ENCODE measurements at regions of chr4 and their contacts with region 1.

Region 1: DNA sequence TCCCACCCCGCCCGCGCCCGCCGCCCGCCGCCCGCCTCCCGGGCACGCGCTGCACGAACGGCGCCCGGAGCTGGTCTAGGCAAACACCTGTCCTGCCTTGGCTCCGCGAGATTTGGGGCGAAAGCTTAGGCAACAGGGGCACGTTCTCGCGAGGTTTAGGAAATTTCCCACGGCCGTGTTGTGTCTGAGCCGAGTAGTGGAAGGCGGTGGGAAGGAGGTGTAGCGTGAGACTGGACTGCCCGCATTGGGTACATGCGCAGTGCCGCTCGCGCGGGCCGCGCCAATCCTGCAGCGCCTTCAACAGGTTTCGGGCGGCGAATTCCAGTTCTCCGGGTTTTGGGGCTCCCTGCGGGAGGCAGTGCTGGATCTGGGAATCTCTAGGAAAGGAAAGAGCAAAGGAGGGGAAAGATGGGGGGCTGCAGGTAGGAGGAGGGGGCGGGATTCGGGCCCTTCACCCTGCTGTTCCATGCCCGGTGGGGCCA is 1.3 kb upstream of the RBPJ start:
- DNase-seq: peak; percentile 99
- H3K4me3 Mint-ChIP-seq: peak overlapping the region; percentile 97
- H3K27ac Mint-ChIP-seq: peak overlapping the region; percentile 99
- H3K4me1 Mint-ChIP-seq: peaks cover 26% of the 10 kb centered on the region
- H3K27me3 Mint-ChIP-seq: no peaks in the 10 kb centered on the region

Region 2: DNA sequence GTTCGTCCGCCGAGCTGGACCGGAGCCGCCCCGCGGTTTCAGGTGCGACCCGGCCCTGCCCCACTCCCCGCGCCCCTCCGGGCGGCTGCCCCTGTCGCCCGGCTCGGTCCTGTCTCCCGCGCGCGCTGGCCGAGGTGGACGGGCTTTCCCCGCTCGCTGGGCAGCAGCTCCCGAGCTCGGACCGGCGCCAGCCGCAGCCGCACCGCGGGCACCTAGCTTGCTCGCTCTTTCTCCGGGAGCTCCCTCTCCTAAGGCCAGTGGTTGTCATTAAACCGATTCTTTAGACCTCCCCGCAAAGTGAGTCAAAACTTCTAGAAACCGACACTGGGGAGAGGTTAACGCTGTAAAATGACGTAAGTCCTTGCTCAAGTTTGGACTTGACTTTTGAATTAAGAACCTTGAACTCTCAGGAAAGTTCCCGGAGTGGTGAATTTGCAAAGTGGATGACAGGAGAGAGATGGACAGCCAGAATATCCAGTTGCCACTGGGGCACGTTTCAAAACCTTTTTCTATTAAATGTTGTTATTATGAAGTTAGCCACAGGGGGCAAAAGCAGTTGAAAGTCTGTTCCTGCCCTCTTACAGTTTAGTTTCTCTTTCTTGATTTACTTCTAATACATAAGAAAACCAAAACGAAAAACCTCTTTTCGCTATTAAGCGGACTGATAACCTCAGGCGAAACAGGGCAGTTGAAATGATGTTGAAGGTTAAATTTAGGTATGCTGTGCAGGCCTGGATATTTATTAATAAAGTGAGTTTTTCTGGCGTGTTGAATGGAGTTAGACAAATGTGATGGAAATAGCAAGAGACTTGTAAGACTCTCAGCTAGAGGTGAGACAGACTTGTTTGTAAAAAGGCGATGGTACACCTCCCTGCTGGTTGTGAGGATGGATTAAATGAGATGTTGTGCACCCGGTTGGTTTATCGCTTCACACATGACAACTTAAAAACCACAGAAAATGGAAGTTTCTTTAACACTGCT is 1084.8 kb before region 1 on chr4:
- CTCF ChIA-PET with region 1: no interaction called
- intact Hi-C with region 1: loop called (anchors 10 kb)
- DNase-seq: peak; percentile 63
- H3K4me3 Mint-ChIP-seq: peak overlapping the region; percentile 92
- H3K27ac Mint-ChIP-seq: peak overlapping the region; percentile 91
- H3K4me1 Mint-ChIP-seq: peaks cover 40% of the 10 kb centered on the region
- H3K27me3 Mint-ChIP-seq: no peaks in the 10 kb centered on the region

Region 3: DNA sequence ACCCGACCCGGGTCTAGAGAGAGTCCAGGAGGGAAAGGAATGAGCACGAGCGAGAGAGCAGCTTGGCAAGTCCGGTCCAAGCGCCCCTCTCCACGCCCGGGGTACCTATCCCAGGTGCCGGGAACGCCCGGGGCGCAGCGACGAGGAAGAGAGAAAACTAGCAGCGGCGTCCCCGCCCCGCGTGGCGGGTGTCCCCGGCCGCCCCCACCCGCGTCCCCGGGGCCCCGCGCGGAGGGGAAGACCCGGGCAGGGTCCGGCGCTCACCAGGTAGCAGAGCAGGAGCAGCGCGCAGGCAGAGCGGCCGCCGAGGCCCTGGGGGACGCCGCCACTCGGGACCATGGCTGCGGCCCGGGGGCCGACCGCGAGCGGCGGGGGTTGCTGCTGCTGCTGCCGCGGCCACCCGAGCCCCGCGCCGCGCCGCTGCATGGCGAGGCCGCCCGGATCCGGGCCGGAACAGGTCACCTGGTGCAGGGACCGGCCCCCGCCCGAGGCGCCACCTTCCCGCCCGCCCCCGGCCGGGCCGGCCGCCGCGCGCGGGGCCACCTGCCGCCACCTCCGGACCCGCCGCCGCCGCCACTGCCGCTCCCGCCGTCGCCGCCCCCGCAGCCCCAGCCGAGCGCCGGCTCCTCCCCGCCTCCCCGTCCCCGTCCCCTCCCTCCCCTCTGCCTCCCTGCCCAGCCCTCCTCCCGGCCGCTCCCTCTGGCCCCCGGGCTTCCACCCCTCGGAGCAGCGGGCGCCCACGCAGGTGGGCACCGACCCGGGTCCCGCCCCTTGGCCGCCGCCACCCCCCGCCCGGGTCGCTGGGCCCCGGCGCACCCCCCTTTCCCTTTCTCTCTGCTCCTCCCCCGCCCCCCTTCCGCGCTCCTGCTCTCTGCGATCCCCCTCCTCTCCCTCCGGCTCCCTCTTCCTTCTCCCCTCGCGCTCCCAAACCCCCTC is 456.8 kb before region 1 on chr4 and contains the start of gene SEL1L3:
- CTCF ChIA-PET with region 1: no interaction called
- intact Hi-C with region 1: loop called (anchors 2 kb)
- DNase-seq: peak; percentile 53
- H3K4me3 Mint-ChIP-seq: peak within 1 kb of the TSS; percentile 93
- H3K27ac Mint-ChIP-seq: peak within 1 kb of the TSS; percentile 92
- H3K4me1 Mint-ChIP-seq: peaks cover 33% of the 10 kb centered on the region
- H3K27me3 Mint-ChIP-seq: no peaks in the 10 kb centered on the region
- total RNA-seq, gene SEL1L3: 32.3 to 38.2 TPM

Region 4: GRCh38 chr4:26061248-26061986 is 258.1 kb before region 1 on chr4:
- CTCF ChIA-PET with region 1: interaction called, 3 read pairs
- intact Hi-C with region 1: loop called (anchors 1 kb)
- DNase-seq: peak; percentile 54
- H3K4me3 Mint-ChIP-seq: no peak overlapping the region
- H3K27ac Mint-ChIP-seq: no peak overlapping the region
- H3K4me1 Mint-ChIP-seq: peaks cover 21% of the 10 kb centered on the region
- H3K27me3 Mint-ChIP-seq: peaks cover 6% of the 10 kb centered on the region

Region 5: GRCh38 chr4:26197018-26197779 is 122.3 kb before region 1 on chr4:
- CTCF ChIA-PET with region 1: interaction called, 20 read pairs
- intact Hi-C with region 1: loop called (anchors 1 kb)
- DNase-seq: peak; percentile 86
- H3K4me3 Mint-ChIP-seq: peak overlapping the region; percentile 0
- H3K27ac Mint-ChIP-seq: peak overlapping the region; percentile 88
- H3K4me1 Mint-ChIP-seq: peaks cover 72% of the 10 kb centered on the region
- H3K27me3 Mint-ChIP-seq: peaks cover 1% of the 10 kb centered on the region

Region 6: DNA sequence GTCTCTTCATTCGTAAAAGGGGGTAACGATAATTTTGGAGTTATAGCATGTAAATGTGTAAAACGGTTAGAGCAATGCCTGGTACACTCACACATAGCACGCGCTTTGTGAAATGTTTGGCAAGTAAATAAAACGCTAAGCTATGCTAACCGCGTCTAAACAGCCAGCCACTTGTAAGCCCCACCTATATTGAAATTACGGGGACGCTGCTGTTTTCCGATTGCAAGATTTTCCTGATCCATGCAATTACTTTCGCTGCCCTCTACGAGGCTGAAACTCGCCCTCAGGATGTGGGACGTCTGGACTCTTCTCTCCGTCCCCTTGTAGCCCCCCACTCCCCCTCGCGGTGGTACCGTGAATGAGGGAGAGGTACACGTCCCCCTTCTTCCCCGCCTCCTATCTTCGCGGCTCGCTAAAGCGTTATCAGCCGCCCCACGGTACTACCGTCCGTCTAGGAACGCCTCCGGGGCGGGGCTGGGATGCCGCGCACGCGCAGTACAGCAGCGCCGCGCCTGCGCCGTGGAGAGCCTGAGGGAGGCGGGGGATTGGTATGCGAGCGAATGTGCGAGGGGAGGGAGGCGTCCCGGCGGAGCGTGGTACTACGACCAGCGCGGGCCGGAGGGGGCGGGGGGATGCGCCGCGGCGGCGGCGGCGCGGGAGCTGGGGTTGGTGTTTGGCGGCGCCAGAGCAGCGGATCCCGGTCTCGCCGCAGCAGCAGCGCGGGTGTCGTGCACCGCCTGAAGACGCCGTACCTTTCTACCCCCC is 540.8 kb after region 1 on chr4 and contains the start of gene STIM2:
- CTCF ChIA-PET with region 1: no interaction called
- intact Hi-C with region 1: loop called (anchors 1 kb)
- DNase-seq: peak; percentile 97
- H3K4me3 Mint-ChIP-seq: peak within 1 kb of the TSS; percentile 94
- H3K27ac Mint-ChIP-seq: peak within 1 kb of the TSS; percentile 96
- H3K4me1 Mint-ChIP-seq: peaks cover 41% of the 10 kb centered on the region
- H3K27me3 Mint-ChIP-seq: no peaks in the 10 kb centered on the region
- total RNA-seq, gene STIM2: 40.5 to 43.1 TPM

Measured in activated naive CD4-positive, alpha-beta T cell treated with anti-CD3 and anti-CD28 coated beads for 36 hours (primary cell).